Sciatic nerve (tissue), 2 donors: ENCODE measurements at regions of chr6 and their contacts with region 1.

Region 1: DNA sequence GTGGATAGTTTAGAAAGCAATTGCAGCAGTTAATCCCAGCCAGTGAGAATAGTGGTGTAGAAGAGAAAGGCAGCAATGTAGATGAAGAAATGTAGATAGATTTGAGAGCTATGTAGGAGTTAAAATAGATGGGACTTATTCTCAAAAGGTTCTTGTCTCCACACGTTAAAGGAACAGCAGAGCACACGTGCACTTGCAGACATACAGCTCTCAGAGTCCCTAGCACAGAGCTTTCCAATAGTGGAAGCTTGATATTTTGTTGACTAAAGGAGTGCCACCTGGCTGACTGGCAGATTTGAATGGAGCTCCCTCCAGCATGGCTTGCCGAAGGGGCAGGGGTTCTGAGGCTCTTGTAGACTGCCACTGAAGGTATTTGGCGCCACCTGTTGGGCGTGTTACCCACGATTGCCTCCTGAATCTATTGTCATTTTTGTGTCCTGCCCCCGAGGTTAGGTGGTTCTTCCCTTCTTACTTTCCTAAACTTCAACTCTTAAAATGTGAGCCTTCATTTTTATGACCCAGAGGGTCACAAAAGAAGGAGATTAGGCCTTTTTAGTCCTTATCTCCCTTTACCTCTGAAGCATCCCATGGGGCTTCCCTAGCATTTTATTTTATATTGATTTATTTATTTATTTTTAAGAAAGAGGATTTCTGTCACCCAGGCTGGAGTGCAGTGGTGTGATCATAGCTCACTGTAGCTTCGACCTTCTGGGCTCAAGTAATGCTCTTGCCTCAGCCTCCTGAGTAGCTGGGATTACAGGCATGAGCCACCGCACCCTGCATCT is 16.4 kb downstream of the BRD2 start:
- DNase-seq: peak; percentile 95
- ATAC-seq: peak; percentile 85

Region 2: DNA sequence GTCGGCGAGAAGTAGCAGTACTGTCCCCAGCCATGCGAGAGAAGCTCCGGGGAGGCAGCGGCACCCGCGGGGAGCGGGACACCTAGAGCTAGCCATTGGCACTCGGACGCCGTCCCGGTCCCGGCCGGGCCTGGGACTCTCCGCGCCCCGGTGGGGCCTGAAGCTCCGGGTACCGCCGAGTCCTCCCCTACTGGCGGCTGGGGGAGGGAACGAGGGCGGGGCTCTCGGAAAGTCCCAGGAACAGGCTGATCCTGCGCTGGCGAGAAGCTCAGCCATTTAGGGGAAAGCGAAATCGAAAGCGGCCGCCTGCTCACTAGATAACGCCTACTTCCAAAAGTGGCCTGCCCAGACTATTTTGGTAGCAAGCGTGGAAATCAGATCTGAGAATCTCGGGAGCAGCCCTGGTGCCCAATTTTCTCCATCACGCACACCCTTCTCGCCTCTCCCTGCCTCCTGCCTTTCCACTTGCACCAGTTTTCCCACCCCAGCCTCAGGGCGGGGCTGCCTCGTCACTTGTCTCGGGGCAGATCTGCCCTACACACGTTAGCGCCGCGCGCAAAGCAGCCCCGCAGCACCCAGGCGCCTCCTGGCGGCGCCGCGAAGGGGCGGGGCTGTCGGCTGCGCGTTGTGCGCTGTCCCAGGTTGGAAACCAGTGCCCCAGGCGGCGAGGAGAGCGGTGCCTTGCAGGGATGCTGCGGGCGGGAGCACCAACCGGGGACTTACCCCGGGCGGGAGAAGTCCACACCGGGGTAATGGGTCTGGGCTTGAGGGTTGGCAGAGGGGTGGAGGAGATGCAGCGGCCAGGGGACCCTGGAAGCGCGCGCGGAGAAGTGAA is 131.0 kb before region 1 on chr6 and contains the starts of genes PSMB9 and TAP1:
- intact Hi-C with region 1: no loop called
- DNase-seq: peak; percentile 96
- ATAC-seq: peak; percentile 96
- total RNA-seq, gene PSMB9: 41.1 TPM
- total RNA-seq, gene TAP1: 32.8 TPM

Region 3: DNA sequence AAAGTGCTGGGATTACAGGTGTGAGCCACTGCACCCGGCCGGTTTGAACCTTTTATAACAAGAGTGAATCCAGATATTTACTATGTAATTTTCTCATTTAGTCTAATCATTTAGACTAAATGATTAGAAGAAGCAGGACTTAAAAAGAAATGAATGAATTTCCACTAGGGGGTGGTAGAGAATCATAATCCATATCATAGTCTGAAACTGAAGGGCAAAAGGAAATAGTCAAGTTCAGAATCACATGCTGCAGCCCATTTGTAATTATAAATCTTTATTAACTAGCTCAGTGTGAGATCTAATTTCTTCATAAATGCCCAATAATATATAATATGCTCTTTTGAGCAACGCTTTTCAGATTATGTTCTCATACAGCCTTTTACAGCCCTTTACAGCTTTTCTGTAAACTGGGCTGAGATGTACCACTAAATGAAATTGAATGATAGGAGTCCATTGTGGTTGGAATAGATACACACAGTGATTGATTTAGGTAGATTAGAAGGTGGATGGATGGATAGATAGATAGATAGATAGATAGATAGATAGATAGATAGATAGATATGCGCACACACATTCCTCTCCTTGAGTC is 99.0 kb before region 1 on chr6:
- intact Hi-C with region 1: loop called (anchors 5 kb)
- DNase-seq: no peak
- ATAC-seq: peak; percentile 70